Right ventricle myocardium inferior (tissue), 1 donor: ENCODE measurements at regions of chr6 and their contacts with region 1.

Region 1: GRCh38 chr6:122839477-122839876 is 50.4 kb downstream of the SMPDL3A start:
- DNase-seq: no peak
- ATAC-seq: no peak

Region 2: GRCh38 chr6:122730775-122731386 is 108.6 kb before region 1 on chr6:
- intact Hi-C with region 1: loop called (anchors 5 kb)
- DNase-seq: no peak
- ATAC-seq: no peak

Region 3: DNA sequence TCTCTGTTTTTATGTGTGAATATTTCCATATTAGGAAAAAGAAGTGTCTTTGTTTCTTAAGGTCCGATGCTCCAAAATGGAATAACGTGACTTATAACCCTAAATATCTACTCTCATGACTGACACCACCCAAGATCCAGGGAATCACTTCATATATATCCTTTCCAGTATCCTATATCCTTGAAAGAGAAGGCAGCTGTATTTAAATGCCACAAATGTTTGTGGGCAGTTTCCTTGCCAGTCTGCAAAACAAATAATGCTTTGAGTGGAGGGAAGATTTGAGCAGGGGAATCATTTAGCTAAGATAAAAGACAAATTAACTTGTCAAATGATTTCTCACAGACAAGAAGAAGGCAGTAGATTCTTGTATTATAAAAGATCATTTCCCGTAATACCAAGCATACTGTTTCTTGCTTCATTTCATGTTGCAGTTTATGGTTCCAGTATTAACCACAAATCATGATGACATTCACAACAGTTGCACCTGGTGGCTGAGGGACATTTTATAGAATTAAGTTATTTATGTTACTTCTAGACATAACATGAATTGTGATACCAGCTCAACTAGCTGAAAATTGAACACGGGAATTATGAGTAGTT is 89.9 kb before region 1 on chr6:
- intact Hi-C with region 1: loop called (anchors 5 kb)
- DNase-seq: no peak
- ATAC-seq: no peak

Region 4: DNA sequence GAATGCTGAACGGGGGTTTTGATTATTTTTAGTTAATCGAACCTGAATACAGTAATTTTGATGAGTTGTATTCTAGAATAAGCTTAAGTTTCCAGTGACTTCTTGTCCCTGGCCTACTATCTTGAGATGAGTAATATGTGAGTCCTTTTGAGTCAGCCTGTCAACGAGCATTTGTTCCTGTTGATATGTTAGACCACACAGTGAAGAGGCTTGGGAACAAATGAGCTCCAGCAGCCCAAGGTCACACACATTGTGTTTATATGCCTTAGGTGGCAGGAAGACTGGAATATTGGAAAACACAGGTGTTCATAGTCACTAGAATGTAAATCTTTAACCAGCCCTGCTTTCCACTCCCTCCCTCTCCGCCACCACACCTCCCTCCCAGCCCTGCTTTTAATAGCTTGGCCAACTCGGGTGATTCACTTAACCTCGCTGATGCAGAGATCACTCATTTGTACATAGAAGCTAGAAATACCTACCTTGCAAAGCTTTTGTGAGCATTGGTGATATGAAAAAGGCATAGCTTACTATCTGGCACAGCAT is 41.3 kb before region 1 on chr6:
- intact Hi-C with region 1: loop called (anchors 5 kb)
- DNase-seq: no peak
- ATAC-seq: no peak

Region 5: GRCh38 chr6:123182998-123183397 is 343.5 kb after region 1 on chr6:
- intact Hi-C with region 1: no loop called
- DNase-seq: peak; percentile 62
- ATAC-seq: no peak